Keratinocyte (primary cell): ENCODE measurements at regions of chr4 and their contacts with region 1.

Region 1: GRCh38 chr4:85149676-85150075 is 183.2 kb upstream of the WDFY3 start:
- DNase-seq: no peak
- H3K4me3 ChIP-seq: no peak overlapping the region
- H3K27ac ChIP-seq: no peak overlapping the region
- H3K4me1 ChIP-seq: peaks cover 4% of the 10 kb centered on the region
- H3K27me3 ChIP-seq: no peaks in the 10 kb centered on the region
- CTCF ChIP-seq: no peak

Region 2: GRCh38 chr4:85370430-85371032 is 220.9 kb after region 1 on chr4:
- dilution Hi-C with region 1: loop called (anchors 25 kb)
- DNase-seq: peak; percentile 9
- H3K4me3 ChIP-seq: no peak overlapping the region
- H3K27ac ChIP-seq: no peak overlapping the region
- H3K4me1 ChIP-seq: no peaks in the 10 kb centered on the region
- H3K27me3 ChIP-seq: peaks cover 6% of the 10 kb centered on the region
- CTCF ChIP-seq: peak; percentile 74 to 89 (median 76)